ENCODE measurements at regions of chr1 and their contacts with region 1.

Region 1: GRCh38 chr1:12658531-12659453 is 14.9 kb downstream of the AADACL4 start:
- DNase-seq: peak; percentile 40 to 92 (median 76)

Region 2: GRCh38 chr1:12314333-12314903 is 344.4 kb before region 1 on chr1:
- intact Hi-C with region 1: loop called (anchors 5 kb)
- DNase-seq: no peak

Region 3: DNA sequence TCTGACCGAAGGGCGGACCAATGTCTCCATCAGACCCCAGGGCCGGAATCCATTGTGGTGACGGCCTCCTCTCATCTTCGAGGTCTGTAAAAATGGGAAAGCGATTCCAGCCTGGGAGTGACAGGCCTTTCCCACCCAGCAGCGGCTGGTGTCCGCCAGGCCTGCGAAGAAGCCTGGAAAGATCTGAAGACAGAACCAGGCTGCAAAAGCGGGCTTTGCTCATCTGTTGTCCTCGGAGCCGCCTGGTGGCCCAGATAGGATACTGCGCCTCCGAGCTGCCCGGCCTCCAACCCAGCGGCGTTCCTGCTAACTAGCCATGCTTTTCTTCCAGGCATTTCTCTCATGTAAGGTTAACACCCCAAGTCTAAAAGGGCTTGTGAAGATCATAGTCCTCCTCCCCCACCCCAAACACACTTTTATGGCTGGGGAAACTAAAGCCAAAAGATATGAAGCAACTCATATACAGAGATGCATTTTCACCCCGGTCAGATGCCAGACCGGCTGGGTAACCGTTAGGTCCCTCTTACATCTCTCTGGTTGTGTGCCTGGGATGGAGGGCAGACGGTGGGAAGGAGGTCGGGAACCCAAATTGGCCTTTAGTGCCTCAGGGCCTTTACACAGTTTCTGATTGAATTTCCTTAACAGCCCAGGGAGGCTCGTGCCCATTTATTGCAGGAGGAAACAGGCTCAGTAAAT is 38.9 kb before region 1 on chr1:
- intact Hi-C with region 1: no loop called
- DNase-seq: peak; percentile 78 to 98 (median 87)

Region 4: GRCh38 chr1:13792419-13792818 is 1133.6 kb after region 1 on chr1:
- intact Hi-C with region 1: no loop called
- DNase-seq: no peak

Measured in posterior cingulate gyrus (tissue), 11 donors.